Activated CD4-positive, alpha-beta memory T cell treated with anti-CD3 and anti-CD28 coated beads for 36 hours (primary cell): ENCODE measurements at regions of chr10 and their contacts with region 1.

Region 1: GRCh38 chr10:48656241-48656913 is 28.3 kb upstream of the WDFY4 start:
- DNase-seq: peak; percentile 93
- H3K4me3 Mint-ChIP-seq: peak overlapping the region; percentile 64
- H3K27ac Mint-ChIP-seq: no peak overlapping the region
- H3K4me1 Mint-ChIP-seq: peaks cover 5% of the 10 kb centered on the region
- H3K27me3 Mint-ChIP-seq: peaks cover 16% of the 10 kb centered on the region

Region 2: DNA sequence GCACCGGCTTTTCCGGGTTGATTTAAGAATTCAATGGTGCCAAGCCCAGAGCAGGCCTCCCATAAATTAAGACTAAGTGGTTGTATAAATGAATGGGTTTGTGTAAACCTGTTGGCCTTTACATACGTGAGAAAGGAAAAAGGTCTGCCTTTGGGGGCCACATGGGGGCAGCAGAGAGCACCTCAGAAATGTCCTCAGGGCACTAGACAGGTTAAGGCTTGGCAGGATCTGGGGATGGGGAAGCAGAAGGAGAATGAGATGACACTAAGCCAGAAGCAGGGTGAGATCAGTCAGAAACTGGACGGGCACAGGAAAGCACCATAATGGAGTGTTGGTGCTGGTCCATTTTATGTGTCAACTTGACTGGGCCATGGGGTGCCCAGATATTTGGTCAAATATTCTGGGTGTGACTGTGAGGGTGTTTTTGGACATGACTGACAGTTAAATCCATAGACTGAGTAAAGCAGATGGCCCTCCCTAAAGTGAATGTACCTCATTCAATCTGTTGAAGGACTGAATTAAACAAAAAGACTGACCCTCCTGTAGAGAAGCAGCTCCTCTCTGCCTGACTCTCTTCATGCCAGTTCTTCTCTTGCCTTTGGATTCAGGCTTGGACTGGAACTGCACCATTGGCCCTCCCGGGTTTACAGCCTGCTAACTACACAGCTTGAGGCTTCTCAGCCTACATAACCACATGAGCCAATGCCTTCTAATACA is 440.7 kb before region 1 on chr10:
- CTCF ChIA-PET with region 1: no interaction called
- POLR2A ChIA-PET with region 1: no interaction called
- intact Hi-C with region 1: no loop called
- DNase-seq: peak; percentile 58
- H3K4me3 Mint-ChIP-seq: no peak overlapping the region
- H3K27ac Mint-ChIP-seq: no peak overlapping the region
- H3K4me1 Mint-ChIP-seq: no peaks in the 10 kb centered on the region
- H3K27me3 Mint-ChIP-seq: peaks cover 10% of the 10 kb centered on the region

Region 3: DNA sequence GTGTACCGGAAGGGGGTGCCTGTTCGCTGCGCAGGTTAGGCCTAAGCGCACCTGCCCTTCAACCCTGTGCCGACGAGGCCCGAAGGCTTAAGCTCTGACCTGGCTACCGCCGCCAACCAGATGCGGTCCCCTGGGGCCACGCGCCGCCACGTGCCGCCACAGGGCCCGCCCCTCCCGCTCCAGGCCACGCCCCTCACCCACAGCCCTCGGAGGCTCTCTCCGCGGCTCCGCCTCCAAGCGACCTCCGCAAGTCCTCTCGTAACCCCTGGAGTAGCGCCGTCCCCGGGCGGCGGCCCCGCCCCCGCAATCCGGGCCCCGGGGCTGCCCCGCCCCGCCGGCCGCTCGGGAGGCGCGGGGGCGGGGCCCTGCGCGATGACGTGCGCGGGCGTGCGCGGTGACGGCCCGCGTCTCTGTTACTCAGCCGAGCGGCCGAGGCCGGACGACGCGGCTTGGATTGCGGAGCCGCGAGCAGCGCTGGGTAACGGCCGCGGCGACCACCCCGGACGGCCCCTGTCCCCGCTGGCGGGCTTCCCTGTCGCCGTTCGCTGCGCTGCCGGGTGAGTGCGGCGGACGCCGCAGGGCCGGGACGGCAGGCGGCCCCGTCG is 350.0 kb before region 1 on chr10 and contains the start of gene MAPK8:
- CTCF ChIA-PET with region 1: interaction called, 4 read pairs
- POLR2A ChIA-PET with region 1: no interaction called
- intact Hi-C with region 1: loop called (anchors 5 kb)
- DNase-seq: peak; percentile 92
- H3K4me3 Mint-ChIP-seq: peak within 1 kb of the TSS; percentile 84
- H3K27ac Mint-ChIP-seq: peak within 1 kb of the TSS; percentile 58
- H3K4me1 Mint-ChIP-seq: peaks cover 34% of the 10 kb centered on the region
- H3K27me3 Mint-ChIP-seq: no peaks in the 10 kb centered on the region
- total RNA-seq, gene MAPK8: 44.2 to 45.4 TPM

Region 4: GRCh38 chr10:48390933-48391845 is 265.2 kb before region 1 on chr10:
- CTCF ChIA-PET with region 1: interaction called, 12 read pairs
- POLR2A ChIA-PET with region 1: no interaction called
- intact Hi-C with region 1: no loop called
- DNase-seq: peak; percentile 24
- H3K4me3 Mint-ChIP-seq: no peak overlapping the region
- H3K27ac Mint-ChIP-seq: no peak overlapping the region
- H3K4me1 Mint-ChIP-seq: peaks cover 51% of the 10 kb centered on the region
- H3K27me3 Mint-ChIP-seq: no peaks in the 10 kb centered on the region

Region 5: DNA sequence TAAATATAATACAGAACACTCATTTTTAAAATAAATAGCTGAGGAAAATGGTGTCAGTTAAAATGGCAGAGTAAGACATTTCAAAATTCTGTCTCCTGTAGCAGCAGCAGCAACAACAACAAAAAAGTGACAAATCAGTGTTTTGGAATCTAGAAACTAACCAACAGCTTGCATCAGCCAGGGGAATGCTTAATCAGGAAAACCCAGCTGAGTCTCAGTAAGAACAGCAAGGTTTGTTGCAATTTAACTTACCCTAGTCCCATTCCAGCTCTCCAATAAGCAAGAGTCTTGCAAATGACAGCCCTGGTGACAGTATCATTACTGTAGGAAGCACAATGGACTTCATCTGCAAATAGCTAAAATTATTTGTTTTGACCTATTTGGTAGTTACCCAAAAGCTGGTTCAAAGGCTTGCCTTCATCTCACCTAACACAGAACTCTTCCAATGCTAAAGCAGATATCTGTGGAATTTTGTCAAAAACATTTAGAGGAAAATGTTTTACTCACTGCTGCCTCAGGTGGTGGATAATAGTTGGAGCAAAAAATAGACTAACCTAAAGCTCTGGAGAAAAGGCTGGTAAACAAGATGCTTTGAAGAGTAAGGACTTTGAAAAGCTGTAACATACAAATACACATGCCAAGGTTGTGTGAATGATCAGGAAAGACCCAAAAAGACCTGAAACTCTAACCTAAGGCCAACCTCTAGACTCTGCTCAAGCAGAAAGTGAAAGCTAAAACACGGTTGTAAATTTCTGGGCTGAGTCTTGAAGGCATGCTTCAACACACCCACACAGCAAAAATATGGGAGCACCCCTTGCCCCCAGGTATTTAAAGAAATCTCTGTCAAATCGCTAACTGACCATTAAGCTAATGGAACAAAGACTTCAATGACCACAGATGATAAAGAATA is 41.6 kb before region 1 on chr10:
- CTCF ChIA-PET with region 1: interaction called, 42 read pairs
- POLR2A ChIA-PET with region 1: no interaction called
- intact Hi-C with region 1: no loop called
- DNase-seq: no peak
- H3K4me3 Mint-ChIP-seq: no peak overlapping the region
- H3K27ac Mint-ChIP-seq: no peak overlapping the region
- H3K4me1 Mint-ChIP-seq: no peaks in the 10 kb centered on the region
- H3K27me3 Mint-ChIP-seq: peaks cover 22% of the 10 kb centered on the region

Region 6: DNA sequence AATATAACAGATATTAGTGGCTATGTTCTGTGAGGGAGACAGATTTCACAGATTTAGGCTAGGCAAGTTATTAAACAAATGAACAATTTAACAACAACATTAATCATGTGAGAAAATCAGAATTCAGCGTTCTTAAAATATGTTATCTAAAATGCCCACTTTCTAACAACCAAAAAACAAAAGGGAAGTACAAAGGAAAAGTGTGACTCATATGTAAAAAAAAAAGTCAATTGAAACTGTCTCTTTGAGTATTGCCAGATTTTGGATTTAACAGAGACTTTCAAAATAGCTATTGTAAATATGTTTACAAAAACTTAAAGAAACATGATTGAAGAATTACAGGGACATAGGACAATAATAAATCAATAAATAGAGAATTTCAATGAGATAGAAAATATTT is 16.7 kb before region 1 on chr10:
- CTCF ChIA-PET with region 1: interaction called, 26 read pairs
- POLR2A ChIA-PET with region 1: no interaction called
- intact Hi-C with region 1: no loop called
- DNase-seq: no peak
- H3K4me3 Mint-ChIP-seq: no peak overlapping the region
- H3K27ac Mint-ChIP-seq: no peak overlapping the region
- H3K4me1 Mint-ChIP-seq: peaks cover 7% of the 10 kb centered on the region
- H3K27me3 Mint-ChIP-seq: peaks cover 37% of the 10 kb centered on the region

Region 7: DNA sequence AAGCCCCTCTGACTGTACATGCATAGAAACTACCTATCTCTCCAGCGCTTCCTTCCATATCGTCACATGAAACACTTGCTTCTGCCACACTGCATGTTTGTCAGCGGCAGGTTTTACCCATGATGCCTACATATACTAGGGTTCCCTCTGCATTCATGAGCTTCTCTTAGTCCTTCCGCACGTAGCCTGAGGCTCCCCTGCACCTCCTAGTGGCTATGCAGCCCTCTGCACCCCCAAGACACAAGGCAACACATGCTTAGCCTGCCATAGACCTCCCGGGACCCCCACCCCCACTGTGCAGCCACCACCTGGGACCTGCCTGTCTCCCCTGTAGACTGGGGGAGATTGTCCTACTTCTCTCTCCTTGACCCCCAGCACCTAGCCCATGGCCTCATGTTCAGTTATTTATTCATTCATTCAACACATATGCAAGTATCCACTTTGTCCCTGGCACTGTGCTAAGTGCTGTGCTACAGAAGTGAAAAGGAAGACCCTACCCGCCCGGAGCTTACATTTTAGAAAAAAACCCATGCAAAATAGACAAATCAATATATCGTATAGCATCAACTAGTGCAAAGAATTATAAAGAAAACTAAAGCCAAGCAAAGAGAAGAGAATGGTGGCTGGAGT is 508.3 kb after region 1 on chr10:
- CTCF ChIA-PET with region 1: interaction called, 3 read pairs
- POLR2A ChIA-PET with region 1: no interaction called
- intact Hi-C with region 1: loop called (anchors 2 kb)
- DNase-seq: peak; percentile 60
- H3K4me3 Mint-ChIP-seq: no peak overlapping the region
- H3K27ac Mint-ChIP-seq: peak overlapping the region; percentile 14
- H3K4me1 Mint-ChIP-seq: peaks cover 41% of the 10 kb centered on the region
- H3K27me3 Mint-ChIP-seq: peaks cover 6% of the 10 kb centered on the region

Region 8: GRCh38 chr10:49518982-49519578 is 862.7 kb after region 1 on chr10:
- CTCF ChIA-PET with region 1: interaction called, 24 read pairs
- POLR2A ChIA-PET with region 1: no interaction called
- intact Hi-C with region 1: loop called (anchors 2 kb)
- DNase-seq: peak; percentile 21
- H3K4me3 Mint-ChIP-seq: no peak overlapping the region
- H3K27ac Mint-ChIP-seq: no peak overlapping the region
- H3K4me1 Mint-ChIP-seq: no peaks in the 10 kb centered on the region
- H3K27me3 Mint-ChIP-seq: no peaks in the 10 kb centered on the region